ENCODE measurements at regions of chr3 and their contacts with region 1.

Region 1: DNA sequence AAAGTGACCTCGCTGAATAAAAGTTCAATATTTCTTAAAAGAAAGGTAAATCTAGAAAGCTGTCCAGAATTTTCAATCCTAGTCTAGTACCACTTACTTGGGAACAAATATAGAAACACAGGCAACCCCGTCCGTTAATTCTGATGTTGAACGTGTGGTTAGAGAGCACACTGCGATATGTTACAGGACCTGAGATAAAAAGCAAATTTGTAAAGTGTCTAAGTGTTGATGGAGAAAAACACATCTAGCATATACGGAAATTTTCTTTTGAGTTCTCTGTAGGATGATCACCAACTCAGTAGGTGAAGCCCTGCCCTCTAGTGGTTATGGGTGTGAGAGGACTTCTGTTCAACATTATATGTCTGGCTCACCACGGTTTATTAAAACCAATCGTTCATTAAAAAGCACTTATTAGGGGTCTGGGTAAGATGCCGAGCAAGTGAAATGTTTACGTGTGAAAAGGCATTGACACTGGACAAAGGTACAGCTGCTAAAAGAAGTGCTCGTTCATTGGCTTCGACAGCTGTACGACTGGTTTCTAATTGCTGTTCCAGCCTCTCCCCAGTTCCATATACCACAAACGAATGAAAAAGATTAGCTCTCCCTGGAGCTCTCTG is 1.0 kb upstream of the ATP2C1 start:
- DNase-seq: peak in 2 of 3 donors; percentile 37 to 42
- ATAC-seq: peak; percentile 68 to 77
- H3K4me3 ChIP-seq: peak overlapping the region; percentile 92
- H3K27ac ChIP-seq: peak overlapping the region; percentile 95
- H3K4me1 ChIP-seq: no peaks in the 10 kb centered on the region
- H3K27me3 ChIP-seq: no peaks in the 10 kb centered on the region

Region 2: DNA sequence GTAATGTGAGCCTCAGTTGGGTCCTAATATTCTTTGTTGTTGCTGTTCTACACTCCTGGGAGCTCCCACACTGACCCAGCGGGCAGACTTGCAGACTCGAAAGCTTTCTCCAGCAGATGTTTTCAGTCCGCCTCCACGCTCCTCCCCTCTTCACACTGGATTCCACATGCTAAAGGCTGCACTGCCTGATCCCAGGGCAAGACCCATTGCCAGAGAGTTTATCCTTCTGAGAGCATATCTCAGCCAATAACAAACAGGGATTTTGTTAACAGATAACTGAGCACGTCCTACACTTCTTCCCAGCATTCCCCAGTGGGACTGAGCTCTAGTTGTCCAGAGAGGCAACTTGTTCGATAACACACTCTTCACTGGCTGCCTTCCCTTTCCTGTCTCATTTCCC is 383.9 kb before region 1 on chr3:
- intact Hi-C with region 1: no loop called
- DNase-seq: peak; percentile 59 to 83 (median 79)
- ATAC-seq: peak; percentile 90 to 94
- H3K4me3 ChIP-seq: no peak overlapping the region
- H3K27ac ChIP-seq: no peak overlapping the region
- H3K4me1 ChIP-seq: no peaks in the 10 kb centered on the region
- H3K27me3 ChIP-seq: peaks cover 2% of the 10 kb centered on the region

Region 3: DNA sequence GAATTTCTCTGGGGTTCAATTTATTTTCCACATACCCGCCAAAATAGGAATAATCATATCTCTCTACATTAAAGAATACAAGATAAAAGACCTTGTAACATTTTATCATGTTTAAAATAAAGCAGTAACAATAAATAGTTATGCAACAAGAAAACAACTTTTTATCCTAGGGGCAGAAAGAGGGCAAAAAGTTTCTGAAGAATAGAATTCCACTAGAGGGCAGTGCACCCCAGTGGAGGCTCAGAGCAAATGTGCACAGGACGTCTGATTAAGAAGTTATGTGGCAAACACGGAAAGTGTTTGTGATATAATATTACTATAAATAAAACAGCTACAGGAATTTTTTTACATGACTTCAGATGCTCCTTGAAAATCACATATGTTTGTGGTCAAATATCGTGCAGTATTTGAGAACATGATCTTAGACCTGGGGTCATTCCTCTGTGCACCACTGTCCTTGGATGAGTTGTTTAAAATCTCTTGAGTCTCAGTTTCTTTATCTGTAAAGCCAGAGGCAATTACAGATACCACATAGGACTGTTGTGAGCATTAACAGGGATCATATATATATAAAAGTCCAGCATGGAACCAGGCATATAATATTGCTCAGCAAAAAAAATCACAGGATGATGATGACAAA is 133.0 kb before region 1 on chr3:
- intact Hi-C with region 1: loop called (anchors 2 to 5 kb)
- DNase-seq: peak; percentile 27 to 53 (median 41)
- ATAC-seq: peak; percentile 63 to 67
- H3K4me3 ChIP-seq: no peak overlapping the region
- H3K27ac ChIP-seq: no peak overlapping the region
- H3K4me1 ChIP-seq: no peaks in the 10 kb centered on the region
- H3K27me3 ChIP-seq: no peaks in the 10 kb centered on the region

Region 4: GRCh38 chr3:130968221-130968620 is 75.4 kb after region 1 on chr3:
- intact Hi-C with region 1: no loop called
- DNase-seq: no peak
- ATAC-seq: no peak
- H3K4me3 ChIP-seq: no peak overlapping the region
- H3K27ac ChIP-seq: no peak overlapping the region
- H3K4me1 ChIP-seq: no peaks in the 10 kb centered on the region
- H3K27me3 ChIP-seq: no peaks in the 10 kb centered on the region

Measured in right cardiac atrium (tissue), 5 donors.